ENCODE measurements at regions of chr18 and their contacts with region 1.

Region 1: GRCh38 chr18:43620936-43621335 is 343.6 kb upstream of the SYT4 start:
- DNase-seq: no peak
- ATAC-seq: peak in 2 of 4 donors; percentile 37 to 59
- H3K4me3 ChIP-seq: no peak overlapping the region
- H3K27ac ChIP-seq: no peak overlapping the region
- H3K4me1 ChIP-seq: no peaks in the 10 kb centered on the region
- H3K27me3 ChIP-seq: no peaks in the 10 kb centered on the region
- CTCF ChIP-seq: peak; percentile 61

Region 2: GRCh38 chr18:44325903-44326635 is 705.1 kb after region 1 on chr18:
- intact Hi-C with region 1: loop called in 1 of 2 experiments (anchors 5 kb)
- DNase-seq: peak; percentile 20 to 49
- ATAC-seq: no peak
- H3K4me3 ChIP-seq: no peak overlapping the region
- H3K27ac ChIP-seq: no peak overlapping the region
- H3K4me1 ChIP-seq: no peaks in the 10 kb centered on the region
- H3K27me3 ChIP-seq: no peaks in the 10 kb centered on the region
- CTCF ChIP-seq: peak; percentile 45

Measured in psoas muscle (tissue), 8 donors.